Mammary epithelial cell (primary cell): ENCODE measurements at regions of chr20 and their contacts with region 1.

Region 1: GRCh38 chr20:22339091-22339881 is 245.1 kb downstream of the FOXA2 start:
- DNase-seq: peak; percentile 65
- H3K4me3 ChIP-seq: no peak overlapping the region
- H3K27ac ChIP-seq: no peak overlapping the region
- H3K4me1 ChIP-seq: peaks cover 22% of the 10 kb centered on the region
- H3K27me3 ChIP-seq: no peaks in the 10 kb centered on the region
- CTCF ChIP-seq: peak; percentile 72 to 82

Region 2: DNA sequence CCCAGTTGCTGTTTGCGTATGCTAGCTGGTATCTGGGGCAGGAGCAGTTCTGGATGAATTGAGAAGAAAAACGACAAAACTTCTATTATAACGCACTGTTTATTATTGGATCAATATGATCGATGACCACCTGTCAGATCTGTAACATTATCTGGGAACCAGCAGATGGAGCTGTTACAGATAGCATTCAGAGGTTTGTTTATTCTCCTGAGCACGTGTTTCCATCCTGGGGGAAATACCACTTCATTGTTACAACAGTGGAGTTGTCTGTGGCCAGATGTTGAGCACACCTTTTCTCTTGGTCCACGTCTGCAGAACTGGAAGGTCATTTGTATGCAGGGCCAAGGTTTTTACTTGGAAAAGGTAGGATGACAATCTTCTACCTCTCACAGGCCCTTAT is 809.4 kb before region 1 on chr20:
- CTCF ChIA-PET with region 1: no interaction called
- dilution Hi-C with region 1: no loop called
- in situ Hi-C with region 1: no loop called
- intact Hi-C with region 1: no loop called
- DNase-seq: no peak
- H3K4me3 ChIP-seq: no peak overlapping the region
- H3K27ac ChIP-seq: no peak overlapping the region
- H3K4me1 ChIP-seq: no peaks in the 10 kb centered on the region
- H3K27me3 ChIP-seq: peaks cover 3% of the 10 kb centered on the region
- CTCF ChIP-seq: peak; percentile 23 to 55

Region 3: DNA sequence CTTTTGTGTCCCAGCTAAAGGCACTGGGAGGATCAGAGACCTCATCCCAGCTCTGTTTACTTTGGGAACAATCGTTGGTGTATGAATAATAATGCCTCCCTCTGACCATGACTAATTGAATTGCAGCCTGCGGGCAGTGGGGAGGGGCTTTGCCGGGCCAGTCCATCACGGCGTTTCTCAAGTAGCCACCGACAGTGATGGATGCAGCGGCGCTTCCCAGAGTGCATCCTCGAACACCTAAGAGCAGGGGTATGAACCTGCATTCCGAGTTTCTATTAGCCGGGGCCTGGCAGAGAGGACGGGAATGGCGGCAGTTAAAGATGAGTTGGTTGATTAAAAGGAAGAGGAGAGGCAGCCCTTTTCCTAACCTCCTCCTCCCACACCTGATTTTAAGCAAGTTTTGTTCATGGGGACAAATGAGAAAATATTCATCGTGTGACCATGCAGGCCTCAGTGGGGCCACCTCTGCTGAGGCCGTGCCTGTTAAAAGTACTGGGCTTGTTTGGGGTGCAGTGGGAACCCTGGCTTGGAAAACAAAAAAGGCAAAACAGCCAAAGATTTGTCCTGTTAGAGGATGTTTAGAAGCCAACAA is 91.0 kb after region 1 on chr20:
- CTCF ChIA-PET with region 1: no interaction called
- dilution Hi-C with region 1: loop called (anchors 5 kb)
- in situ Hi-C with region 1: no loop called
- intact Hi-C with region 1: no loop called
- DNase-seq: no peak
- H3K4me3 ChIP-seq: no peak overlapping the region
- H3K27ac ChIP-seq: no peak overlapping the region
- H3K4me1 ChIP-seq: no peaks in the 10 kb centered on the region
- H3K27me3 ChIP-seq: no peaks in the 10 kb centered on the region
- CTCF ChIP-seq: no peak

Region 4: GRCh38 chr20:22684072-22684762 is 344.9 kb after region 1 on chr20:
- CTCF ChIA-PET with region 1: interaction called, 4 read pairs
- dilution Hi-C with region 1: loop called (anchors 5 kb)
- in situ Hi-C with region 1: loop called (anchors 5 kb)
- intact Hi-C with region 1: loop called (anchors 1 kb)
- DNase-seq: peak; percentile 54
- H3K4me3 ChIP-seq: no peak overlapping the region
- H3K27ac ChIP-seq: no peak overlapping the region
- H3K4me1 ChIP-seq: no peaks in the 10 kb centered on the region
- H3K27me3 ChIP-seq: no peaks in the 10 kb centered on the region
- CTCF ChIP-seq: peak; percentile 79 to 91